Colonic mucosa (tissue), 4 donors: ENCODE measurements at regions of chr10 and their contacts with region 1.

Region 1: DNA sequence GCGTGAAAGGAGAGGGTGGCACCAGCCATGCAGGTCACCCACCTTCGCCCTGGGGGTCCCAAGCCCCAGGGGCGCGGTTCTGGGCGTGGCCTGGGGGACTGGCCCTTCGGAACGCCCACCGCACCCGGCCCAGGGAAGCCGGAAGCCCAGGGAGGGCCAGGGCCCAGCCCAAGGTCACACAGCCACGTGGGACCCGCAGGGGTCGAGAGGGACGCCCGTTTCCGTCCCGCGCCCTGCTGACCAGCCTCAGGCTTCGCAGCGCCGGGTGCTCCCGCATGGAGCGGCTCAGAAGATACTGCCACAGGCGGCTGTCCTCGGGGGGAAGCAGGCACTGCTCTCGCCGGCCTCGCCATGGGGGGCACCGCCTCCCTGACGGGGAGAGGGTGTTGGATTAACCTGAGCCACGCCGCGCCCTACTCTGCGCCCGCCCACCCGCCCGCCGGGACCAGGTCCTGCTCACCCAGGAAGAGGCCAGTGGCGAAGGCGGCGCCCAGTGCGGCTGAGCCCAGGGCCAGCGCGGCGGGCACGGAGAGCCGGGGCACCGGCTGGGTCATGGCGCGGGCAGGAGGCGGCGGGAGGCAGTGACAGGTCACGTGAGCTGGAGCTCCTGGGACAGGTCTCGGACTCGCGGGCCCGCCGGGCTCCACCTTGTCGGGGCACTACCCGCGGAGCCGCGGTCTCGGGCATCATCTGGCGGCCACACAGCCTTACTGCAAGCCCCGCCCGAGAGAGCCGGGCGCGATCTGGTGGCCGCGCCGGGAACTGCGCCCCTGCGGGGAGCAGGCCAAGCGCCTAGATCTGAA is at the start of gene COMTD1:
- DNase-seq: peak; percentile 96
- H3K4me3 ChIP-seq: peak within 1 kb of the TSS; percentile 78
- H3K27ac ChIP-seq: peak within 1 kb of the TSS; percentile 90
- H3K4me1 ChIP-seq: no peaks in the 10 kb centered on the region
- H3K27me3 ChIP-seq: no peaks in the 10 kb centered on the region
- CTCF ChIP-seq: peak; percentile 100
- total RNA-seq, gene COMTD1: 62.6 to 117 TPM

Region 2: GRCh38 chr10:74244097-74244685 is 991.4 kb before region 1 on chr10:
- intact Hi-C with region 1: loop called (anchors 10 kb)
- DNase-seq: peak; percentile 22
- H3K4me3 ChIP-seq: no peak overlapping the region
- H3K27ac ChIP-seq: no peak overlapping the region
- H3K4me1 ChIP-seq: no peaks in the 10 kb centered on the region
- H3K27me3 ChIP-seq: no peaks in the 10 kb centered on the region
- CTCF ChIP-seq: peak; percentile 39

Region 3: DNA sequence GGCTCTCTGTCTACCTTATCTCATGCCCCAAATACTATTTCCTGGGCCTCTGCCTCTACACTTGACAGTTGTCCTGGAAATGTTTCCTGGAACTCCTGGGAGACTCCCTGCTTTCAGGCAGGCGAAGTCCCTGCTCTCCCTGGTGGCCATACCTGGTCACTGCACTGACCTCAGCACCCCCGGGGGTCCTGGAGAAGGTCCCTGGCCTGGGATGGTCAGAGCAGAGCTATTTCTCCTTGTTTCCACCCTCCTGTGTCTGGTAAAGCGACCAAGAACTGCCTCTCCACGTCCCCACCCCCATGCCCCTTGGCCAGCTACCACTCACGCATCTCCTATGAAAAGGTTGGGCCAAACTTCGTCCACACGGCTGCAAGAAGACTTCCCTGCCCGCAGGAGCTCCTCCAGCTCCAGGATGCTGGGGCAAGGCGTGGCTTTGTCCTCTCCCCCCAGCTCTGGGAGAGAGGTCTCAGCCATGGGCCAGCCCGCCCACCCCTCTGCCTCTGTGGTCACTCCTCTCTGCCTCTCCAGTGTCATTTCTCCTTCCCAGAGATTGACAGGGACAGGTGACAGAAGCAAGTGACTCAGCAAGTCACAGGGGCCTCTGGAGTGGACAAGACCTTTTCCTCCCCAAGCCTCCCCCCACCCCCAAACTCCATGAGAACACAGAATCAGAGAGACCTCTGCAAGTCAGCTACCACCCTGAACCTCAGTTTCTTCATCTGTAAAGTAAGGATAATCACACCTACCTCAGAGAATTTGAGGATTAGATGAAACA is 126.7 kb before region 1 on chr10:
- intact Hi-C with region 1: loop called (anchors 5 kb)
- DNase-seq: no peak
- H3K4me3 ChIP-seq: no peak overlapping the region
- H3K27ac ChIP-seq: no peak overlapping the region
- H3K4me1 ChIP-seq: no peaks in the 10 kb centered on the region
- H3K27me3 ChIP-seq: no peaks in the 10 kb centered on the region
- CTCF ChIP-seq: peak; percentile 60

Region 4: DNA sequence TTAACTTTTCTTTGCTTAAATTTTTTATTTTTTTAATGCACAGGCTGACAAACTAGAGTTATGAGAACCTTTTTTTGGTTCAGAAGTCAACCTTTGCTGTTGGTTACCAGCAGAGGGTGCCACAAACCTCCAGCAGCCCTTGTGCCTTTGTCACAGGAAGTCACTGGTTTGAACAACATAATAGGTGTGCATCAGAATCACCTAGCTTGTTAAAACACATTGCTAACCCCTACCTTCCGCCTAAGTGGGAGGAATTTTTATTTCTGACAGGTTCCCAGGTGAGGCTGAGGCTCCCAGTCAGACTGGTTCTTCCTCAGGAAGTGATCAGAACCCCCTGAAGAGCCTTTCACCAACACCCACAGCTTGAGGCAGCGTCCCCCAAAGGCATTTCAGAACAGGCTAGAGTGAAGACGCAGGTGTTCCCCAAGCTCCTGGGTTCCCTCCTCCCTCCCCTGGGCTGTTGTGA is 47.6 kb before region 1 on chr10:
- intact Hi-C with region 1: loop called (anchors 2 kb)
- DNase-seq: peak; percentile 64
- H3K4me3 ChIP-seq: no peak overlapping the region
- H3K27ac ChIP-seq: peak overlapping the region; percentile 26
- H3K4me1 ChIP-seq: peaks cover 10% of the 10 kb centered on the region
- H3K27me3 ChIP-seq: no peaks in the 10 kb centered on the region
- CTCF ChIP-seq: peak; percentile 68